Naive thymus-derived CD4-positive, alpha-beta T cell (primary cell): ENCODE measurements at regions of chr2 and their contacts with region 1.

Region 1: DNA sequence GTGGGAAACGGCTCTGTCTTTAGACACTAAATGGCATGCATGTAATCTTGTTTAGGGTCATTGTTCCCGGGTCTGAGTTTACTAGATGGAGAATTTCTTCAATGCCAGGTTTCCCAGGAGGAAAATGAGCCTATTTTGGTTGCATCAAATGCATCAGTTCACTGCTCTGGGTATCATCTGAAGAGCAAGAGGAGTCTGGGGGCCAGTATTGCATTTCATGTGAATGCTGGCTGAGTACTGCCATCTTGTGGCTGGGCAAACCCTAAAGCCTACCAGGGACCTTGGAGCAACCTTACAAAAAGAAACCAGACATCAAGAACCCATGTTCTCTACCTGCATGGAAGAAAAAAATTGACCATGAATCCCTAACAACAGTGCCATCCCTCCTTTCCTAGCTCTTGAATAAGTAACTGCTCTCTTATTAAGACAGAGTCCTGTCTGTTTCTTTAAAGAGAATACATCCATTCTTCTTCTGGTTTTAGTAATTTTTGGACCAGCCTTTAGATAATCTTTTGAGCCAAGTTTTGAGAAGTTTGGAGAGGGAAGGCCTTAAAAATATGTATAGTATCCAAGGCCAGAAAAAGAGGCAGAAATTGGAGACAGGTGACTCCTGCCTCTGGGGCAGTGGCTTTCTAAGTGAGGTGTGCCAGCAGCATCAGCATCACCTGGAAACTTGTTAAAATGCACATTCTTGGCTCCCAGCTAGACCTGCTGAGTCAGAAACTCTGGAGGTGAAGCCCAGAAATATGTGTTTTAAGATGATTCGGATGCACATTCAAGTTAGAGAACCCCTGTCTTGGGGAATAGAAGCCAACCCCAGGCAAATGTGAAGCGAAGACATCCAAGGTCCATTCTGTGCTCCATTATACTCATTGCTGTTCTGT is 261.0 kb upstream of the CXCR4 start:
- DNase-seq: peak; percentile 44 to 81 (median 75)
- ATAC-seq: peak; percentile 69
- H3K4me3 ChIP-seq: no peak overlapping the region
- H3K4me3 Mint-ChIP-seq: peak overlapping the region in 1 of 10 donors; percentile 12
- H3K27ac ChIP-seq: no peak overlapping the region
- H3K27ac Mint-ChIP-seq: peak overlapping the region in 6 of 9 donors; percentile 48 to 93 (median 82)
- H3K4me1 ChIP-seq: peaks cover 20 to 34% of the 10 kb centered on the region in 2 donors
- H3K4me1 Mint-ChIP-seq: peaks cover 32 to 84% (median 65%) of the 10 kb centered on the region in 7 donors
- H3K27me3 ChIP-seq: no peaks in the 10 kb centered on the region
- H3K27me3 Mint-ChIP-seq: no peaks in the 10 kb centered on the region

Region 2: GRCh38 chr2:136052369-136053362 is 326.3 kb before region 1 on chr2:
- CTCF ChIA-PET with region 1: interaction called, 5 read pairs
- POLR2A ChIA-PET with region 1: interaction called, 3 read pairs
- intact Hi-C with region 1: loop called (anchors 1 to 2 kb)
- DNase-seq: no peak
- ATAC-seq: peak; percentile 15
- H3K4me3 ChIP-seq: peak overlapping the region; percentile 12
- H3K4me3 Mint-ChIP-seq: peak overlapping the region; percentile 37 to 85 (median 70)
- H3K27ac ChIP-seq: peak overlapping the region; percentile 50
- H3K27ac Mint-ChIP-seq: peak overlapping the region; percentile 62 to 96 (median 87)
- H3K4me1 ChIP-seq: peaks cover 86 to 92% of the 10 kb centered on the region in 2 donors
- H3K4me1 Mint-ChIP-seq: peaks cover 60 to 93% (median 90%) of the 10 kb centered on the region in 7 donors
- H3K27me3 ChIP-seq: no peaks in the 10 kb centered on the region
- H3K27me3 Mint-ChIP-seq: no peaks in the 10 kb centered on the region

Region 3: DNA sequence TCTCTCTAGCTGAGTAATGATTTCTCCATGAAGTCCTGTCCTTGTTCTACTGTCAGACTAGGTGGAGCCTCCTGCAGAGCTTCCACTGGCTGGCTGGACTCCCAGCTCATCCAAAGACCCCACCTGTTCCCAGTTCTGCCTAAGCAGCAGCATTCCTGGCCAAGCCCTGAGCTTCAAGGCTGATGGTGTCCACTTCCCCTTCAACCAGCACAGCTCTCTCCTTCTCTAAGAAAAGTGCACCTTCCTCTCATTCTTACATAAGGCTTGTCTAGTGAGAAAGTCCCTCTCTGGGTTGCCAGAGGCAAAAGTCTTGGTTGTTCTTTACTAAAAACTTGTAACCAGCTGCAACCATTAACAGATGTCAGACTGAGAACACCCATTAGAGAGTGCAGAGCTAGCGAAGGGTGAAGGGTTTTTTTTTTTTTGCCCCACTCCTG is 319.9 kb before region 1 on chr2:
- CTCF ChIA-PET with region 1: interaction called, 3 read pairs
- POLR2A ChIA-PET with region 1: interaction called, 3 read pairs
- intact Hi-C with region 1: loop called in 1 of 2 experiments (anchors 1 kb)
- DNase-seq: no peak
- ATAC-seq: no peak
- H3K4me3 ChIP-seq: no peak overlapping the region
- H3K4me3 Mint-ChIP-seq: peak overlapping the region in 2 of 10 donors; percentile 43 to 50
- H3K27ac ChIP-seq: no peak overlapping the region
- H3K27ac Mint-ChIP-seq: peak overlapping the region in 5 of 9 donors; percentile 16 to 90 (median 65)
- H3K4me1 ChIP-seq: peaks cover 43 to 44% of the 10 kb centered on the region in 2 donors
- H3K4me1 Mint-ChIP-seq: peaks cover 46 to 90% (median 80%) of the 10 kb centered on the region in 7 donors
- H3K27me3 ChIP-seq: no peaks in the 10 kb centered on the region
- H3K27me3 Mint-ChIP-seq: no peaks in the 10 kb centered on the region

Region 4: GRCh38 chr2:136238286-136239078 is 140.5 kb before region 1 on chr2:
- CTCF ChIA-PET with region 1: interaction called, 4 read pairs
- POLR2A ChIA-PET with region 1: interaction called, 7 read pairs
- intact Hi-C with region 1: loop called (anchors 2 to 5 kb)
- DNase-seq: peak in 8 of 9 donors; percentile 33 to 75 (median 60)
- ATAC-seq: peak; percentile 84
- H3K4me3 ChIP-seq: no peak overlapping the region
- H3K4me3 Mint-ChIP-seq: peak overlapping the region; percentile 26 to 64 (median 48)
- H3K27ac ChIP-seq: peak overlapping the region; percentile 25
- H3K27ac Mint-ChIP-seq: peak overlapping the region; percentile 84 to 95 (median 90)
- H3K4me1 ChIP-seq: peaks cover 31 to 36% of the 10 kb centered on the region in 2 donors
- H3K4me1 Mint-ChIP-seq: peaks cover 32 to 60% (median 54%) of the 10 kb centered on the region in 7 donors
- H3K27me3 ChIP-seq: no peaks in the 10 kb centered on the region
- H3K27me3 Mint-ChIP-seq: no peaks in the 10 kb centered on the region

Region 5: DNA sequence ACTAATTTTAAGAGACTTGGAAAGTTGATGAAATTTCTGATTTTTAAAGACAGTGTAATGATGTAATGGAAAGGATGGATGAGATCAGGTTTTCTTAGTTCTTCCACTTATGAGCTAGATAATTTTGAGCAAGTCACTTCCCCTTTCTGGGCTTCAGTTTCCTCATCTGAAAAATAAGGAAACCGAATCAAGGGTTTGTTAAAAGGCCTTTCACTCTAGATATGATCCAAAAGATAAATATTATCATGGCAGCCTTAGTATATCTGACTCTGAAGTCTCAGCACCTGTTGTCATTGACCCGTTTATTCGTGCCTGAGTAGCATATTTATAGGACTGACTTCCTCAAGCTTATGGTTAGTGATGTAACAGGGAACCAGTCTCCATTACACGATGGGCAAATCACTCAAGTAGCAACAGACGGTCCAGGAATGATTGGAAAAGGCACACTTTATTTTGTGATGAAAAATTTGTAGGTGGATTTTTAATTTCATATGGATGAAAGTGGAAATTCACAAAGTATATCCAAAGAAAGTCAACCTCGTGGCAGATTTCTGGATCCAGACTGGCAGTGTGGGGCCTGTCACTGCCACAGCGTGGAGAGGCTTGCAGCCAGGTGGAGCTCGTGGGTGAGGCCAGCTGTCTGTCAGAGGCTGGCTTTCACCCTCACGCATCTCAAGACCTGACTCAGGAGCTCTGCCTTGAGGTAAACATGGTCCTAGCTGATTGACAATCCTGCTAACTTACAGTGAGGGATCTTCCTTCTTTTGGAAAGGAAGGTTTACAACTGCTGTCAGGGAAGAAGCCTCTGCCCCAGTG is 123.1 kb before region 1 on chr2:
- CTCF ChIA-PET with region 1: interaction called, 6 read pairs
- POLR2A ChIA-PET with region 1: interaction called, 6 read pairs
- intact Hi-C with region 1: loop called in 1 of 2 experiments (anchors 1 kb)
- DNase-seq: peak in 7 of 9 donors; percentile 16 to 58 (median 35)
- ATAC-seq: peak; percentile 68
- H3K4me3 ChIP-seq: no peak overlapping the region
- H3K4me3 Mint-ChIP-seq: no peak overlapping the region
- H3K27ac ChIP-seq: no peak overlapping the region
- H3K27ac Mint-ChIP-seq: peak overlapping the region in 8 of 9 donors; percentile 2 to 87 (median 40)
- H3K4me1 ChIP-seq: no peaks in the 10 kb centered on the region
- H3K4me1 Mint-ChIP-seq: peaks cover 7 to 42% (median 27%) of the 10 kb centered on the region in 7 donors
- H3K27me3 ChIP-seq: no peaks in the 10 kb centered on the region
- H3K27me3 Mint-ChIP-seq: no peaks in the 10 kb centered on the region

Region 6: DNA sequence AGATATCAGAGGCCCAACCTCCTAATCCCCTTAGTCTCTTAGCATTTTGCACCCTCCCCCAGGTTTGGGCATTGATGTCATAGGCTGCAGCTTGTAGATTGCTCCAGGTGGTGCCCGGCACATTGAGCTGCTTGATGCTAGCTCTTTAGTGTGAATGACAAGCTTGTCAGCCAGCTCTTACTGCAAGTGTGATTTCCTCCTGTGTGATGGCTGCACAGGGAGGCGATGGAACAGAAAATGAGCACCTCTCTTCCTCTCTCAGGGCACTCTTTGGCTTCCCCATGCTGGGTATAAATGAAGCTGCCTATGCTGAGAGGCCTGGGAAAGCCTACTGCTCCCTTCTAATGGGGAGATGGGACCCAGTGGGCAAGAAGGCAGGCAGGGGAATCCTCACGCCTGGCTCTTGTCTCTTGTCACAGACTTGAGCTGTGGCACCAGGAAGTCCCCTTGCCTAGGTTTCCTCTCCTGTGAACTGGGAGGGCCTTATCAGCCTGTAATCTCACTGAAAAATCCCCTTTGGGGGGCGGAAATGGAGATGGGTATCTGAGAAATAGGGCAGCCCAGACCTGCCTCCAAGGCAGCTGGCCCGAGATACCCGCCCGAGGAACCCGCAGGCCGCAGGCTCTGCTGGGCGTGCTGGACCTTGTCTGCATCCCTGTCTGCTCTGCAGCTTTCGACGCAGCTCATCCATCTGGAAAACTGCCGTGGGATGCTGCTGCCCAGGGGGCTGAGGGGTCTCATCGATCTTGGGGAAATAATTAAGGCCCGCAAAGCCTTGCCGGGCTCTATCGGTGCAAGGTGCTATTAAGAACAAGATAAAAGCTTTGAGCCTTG is 97.5 kb before region 1 on chr2:
- CTCF ChIA-PET with region 1: no interaction called
- POLR2A ChIA-PET with region 1: interaction called, 3 read pairs
- intact Hi-C with region 1: loop called in 1 of 2 experiments (anchors 2 kb)
- DNase-seq: peak; percentile 24 to 73 (median 53)
- ATAC-seq: peak; percentile 91
- H3K4me3 ChIP-seq: no peak overlapping the region
- H3K4me3 Mint-ChIP-seq: peak overlapping the region; percentile 16 to 79 (median 52)
- H3K27ac ChIP-seq: peak overlapping the region; percentile 58
- H3K27ac Mint-ChIP-seq: peak overlapping the region; percentile 86 to 98 (median 94)
- H3K4me1 ChIP-seq: peaks cover 26 to 33% of the 10 kb centered on the region in 2 donors
- H3K4me1 Mint-ChIP-seq: peaks cover 28 to 59% (median 50%) of the 10 kb centered on the region in 7 donors
- H3K27me3 ChIP-seq: no peaks in the 10 kb centered on the region
- H3K27me3 Mint-ChIP-seq: no peaks in the 10 kb centered on the region

Region 7: GRCh38 chr2:136407952-136408318 is 29.0 kb after region 1 on chr2:
- CTCF ChIA-PET with region 1: no interaction called
- POLR2A ChIA-PET with region 1: no interaction called
- intact Hi-C with region 1: no loop called
- DNase-seq: no peak
- ATAC-seq: peak; percentile 29
- H3K4me3 ChIP-seq: no peak overlapping the region
- H3K4me3 Mint-ChIP-seq: no peak overlapping the region
- H3K27ac ChIP-seq: no peak overlapping the region
- H3K27ac Mint-ChIP-seq: no peak overlapping the region
- H3K4me1 ChIP-seq: no peaks in the 10 kb centered on the region
- H3K4me1 Mint-ChIP-seq: peaks cover 0 to 1% (median 0%) of the 10 kb centered on the region in 7 donors
- H3K27me3 ChIP-seq: peaks cover 0 to 3% of the 10 kb centered on the region in 2 donors
- H3K27me3 Mint-ChIP-seq: peaks cover 20 to 57% (median 34%) of the 10 kb centered on the region in 5 donors